ENCODE measurements at regions of chr20 and their contacts with region 1.

Region 1: DNA sequence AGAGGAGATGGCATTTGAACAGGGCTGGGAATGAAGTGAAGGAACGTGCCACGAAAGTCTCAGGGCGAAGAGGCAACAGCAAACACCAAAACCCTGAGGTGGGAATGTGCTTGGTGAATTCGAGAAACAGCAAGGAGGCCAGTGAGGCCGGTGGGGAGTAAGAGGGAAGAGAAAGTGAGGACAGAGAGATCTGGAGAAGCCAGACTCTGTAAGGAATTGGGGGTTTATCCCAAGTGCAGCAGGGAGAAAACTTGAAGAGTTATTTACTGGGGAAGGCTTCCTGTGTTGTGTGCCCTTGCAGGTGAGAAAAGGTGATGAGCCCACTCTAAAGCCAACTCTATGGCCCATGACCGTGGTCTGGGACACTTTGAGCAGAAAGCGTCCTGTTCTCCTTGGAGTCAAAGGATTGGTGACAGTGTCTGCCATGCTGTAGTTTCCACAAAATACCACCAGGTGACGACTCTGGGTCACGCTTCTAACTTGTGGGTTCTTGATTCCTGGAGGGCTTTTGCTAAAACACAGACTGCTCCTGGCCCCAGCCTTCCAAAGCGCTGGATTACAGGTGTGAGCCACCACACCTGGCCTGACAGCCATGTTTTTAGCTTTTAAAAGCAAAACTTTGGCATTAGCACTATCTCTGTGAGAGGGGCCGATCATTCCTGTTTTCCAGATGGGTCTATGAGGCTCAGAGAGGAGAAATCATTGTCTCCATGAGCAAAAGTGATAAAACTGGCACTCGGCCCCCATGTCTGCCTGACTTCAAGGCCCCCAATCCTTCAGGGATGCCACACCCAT is 18.0 kb upstream of the CSNK2A1 start:
- H3K4me3 ChIP-seq: no peak overlapping the region
- H3K27ac ChIP-seq: no peak overlapping the region
- H3K4me1 ChIP-seq: no peaks in the 10 kb centered on the region
- CTCF ChIP-seq: peak; percentile 83

Region 2: GRCh38 chr20:438571-439469 is 122.8 kb before region 1 on chr20:
- CTCF ChIA-PET with region 1: no interaction called
- POLR2A ChIA-PET with region 1: no interaction called
- H3K4me3 ChIP-seq: no peak overlapping the region
- H3K27ac ChIP-seq: no peak overlapping the region
- H3K4me1 ChIP-seq: no peaks in the 10 kb centered on the region
- CTCF ChIP-seq: no peak

Region 3: GRCh38 chr20:549722-550496 is 11.7 kb before region 1 on chr20:
- CTCF ChIA-PET with region 1: interaction called, 12 read pairs
- POLR2A ChIA-PET with region 1: no interaction called
- H3K4me3 ChIP-seq: no peak overlapping the region
- H3K27ac ChIP-seq: no peak overlapping the region
- H3K4me1 ChIP-seq: no peaks in the 10 kb centered on the region
- CTCF ChIP-seq: no peak

Region 4: DNA sequence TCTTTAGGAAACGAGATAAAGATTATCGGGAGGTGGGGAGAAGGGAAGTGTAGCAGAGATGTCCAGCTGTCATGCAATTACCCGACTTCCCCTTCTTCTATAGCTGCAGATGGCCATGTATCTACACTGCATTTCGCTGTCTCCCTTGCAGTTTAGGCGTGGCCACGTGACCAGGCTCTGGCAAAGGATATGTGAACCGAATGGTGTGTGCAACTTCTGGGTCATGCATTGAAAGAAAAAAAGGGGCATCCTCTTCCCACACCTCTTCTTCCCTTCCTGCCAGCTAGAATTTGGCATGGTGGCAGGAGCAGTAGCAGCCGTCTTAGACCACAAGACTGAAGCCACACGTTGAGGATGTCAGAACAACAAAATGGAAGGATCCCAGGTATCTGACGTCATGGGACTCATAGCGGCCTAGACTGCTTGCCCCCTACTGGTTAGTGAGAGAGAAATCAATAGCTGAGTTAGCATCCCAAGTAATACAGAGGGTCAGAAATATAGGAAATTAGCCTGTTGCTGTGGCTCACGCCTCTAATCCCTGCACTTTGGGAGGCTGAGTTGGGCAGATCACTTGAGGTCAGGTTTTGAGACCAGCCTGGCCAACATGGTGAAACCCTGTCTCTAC is 15.6 kb after region 1 on chr20:
- CTCF ChIA-PET with region 1: interaction called, 15 read pairs
- POLR2A ChIA-PET with region 1: no interaction called
- H3K4me3 ChIP-seq: no peak overlapping the region
- H3K27ac ChIP-seq: no peak overlapping the region
- H3K4me1 ChIP-seq: no peaks in the 10 kb centered on the region
- CTCF ChIP-seq: no peak

Region 5: DNA sequence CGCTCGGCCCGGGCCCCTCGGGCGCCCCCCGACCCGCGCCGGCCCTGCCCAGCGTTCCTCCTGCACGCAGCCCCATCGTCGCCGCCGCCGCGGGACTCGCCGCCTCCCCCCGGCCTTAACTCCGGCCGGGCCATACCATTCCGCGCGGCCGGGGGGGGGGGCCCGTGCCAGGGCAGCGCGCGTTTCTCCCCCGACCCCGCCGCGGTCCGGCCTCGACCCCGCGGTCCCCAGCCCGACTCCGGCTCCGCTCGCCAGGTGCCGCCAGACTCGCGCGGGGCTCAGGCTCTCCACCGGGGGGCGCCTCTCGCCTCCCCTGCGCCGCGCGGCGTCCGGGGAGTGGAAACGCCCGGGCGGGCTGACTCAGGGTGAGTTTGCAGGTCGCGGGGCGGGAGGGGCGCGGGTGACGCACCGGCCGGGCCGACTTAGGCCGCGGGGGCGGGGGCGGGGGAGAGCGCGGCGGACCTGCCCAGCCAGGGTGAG is 91.5 kb after region 1 on chr20 and contains the start of gene SRXN1:
- CTCF ChIA-PET with region 1: interaction called, 130 read pairs
- POLR2A ChIA-PET with region 1: interaction called, 3 read pairs
- H3K4me3 ChIP-seq: peak within 1 kb of the TSS; percentile 59
- H3K27ac ChIP-seq: peak within 1 kb of the TSS; percentile 77
- H3K4me1 ChIP-seq: no peaks in the 10 kb centered on the region
- CTCF ChIP-seq: peak; percentile 39; the same call in 1 of the 2 replicates

Region 6: DNA sequence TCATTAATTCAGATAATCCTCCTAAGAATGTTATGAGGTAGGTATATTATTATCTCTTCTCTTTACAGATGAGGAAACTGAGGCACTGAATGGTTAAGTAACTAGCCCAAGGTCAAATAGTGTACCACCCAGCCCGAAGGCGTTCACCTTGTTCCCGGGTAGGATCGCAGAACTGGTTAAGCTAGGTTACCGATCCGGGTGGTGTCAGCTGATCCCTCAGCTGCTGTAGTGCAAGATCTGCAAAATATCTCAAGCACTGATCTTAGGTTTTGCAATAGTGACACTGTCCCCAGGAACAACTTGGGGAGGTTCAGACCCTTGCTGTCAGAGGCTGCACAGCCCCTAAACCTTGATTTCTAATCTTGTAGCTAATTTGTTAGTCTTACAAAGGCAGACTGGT is 178.5 kb after region 1 on chr20:
- CTCF ChIA-PET with region 1: interaction called, 48 read pairs
- POLR2A ChIA-PET with region 1: no interaction called
- H3K4me3 ChIP-seq: no peak overlapping the region
- H3K27ac ChIP-seq: no peak overlapping the region
- H3K4me1 ChIP-seq: no peaks in the 10 kb centered on the region
- CTCF ChIP-seq: no peak

Measured in HEK293 (cell line).